Psoas muscle (tissue), 8 donors: ENCODE measurements at regions of chr4 and their contacts with region 1.

Region 1: GRCh38 chr4:53490965-53491622 is 100.2 kb downstream of the LNX1 start:
- DNase-seq: no peak
- ATAC-seq: peak in 3 of 4 donors; percentile 65 to 85 (median 65)
- H3K4me3 ChIP-seq: no peak overlapping the region
- H3K27ac ChIP-seq: no peak overlapping the region
- H3K4me1 ChIP-seq: peaks cover 11% of the 10 kb centered on the region
- H3K27me3 ChIP-seq: no peaks in the 10 kb centered on the region
- CTCF ChIP-seq: peak; percentile 71

Region 2: GRCh38 chr4:53532521-53532920 is 41.4 kb after region 1 on chr4:
- intact Hi-C with region 1: no loop called
- DNase-seq: no peak
- ATAC-seq: no peak
- H3K4me3 ChIP-seq: no peak overlapping the region
- H3K27ac ChIP-seq: no peak overlapping the region
- H3K4me1 ChIP-seq: no peaks in the 10 kb centered on the region
- H3K27me3 ChIP-seq: no peaks in the 10 kb centered on the region
- CTCF ChIP-seq: no peak

Region 3: DNA sequence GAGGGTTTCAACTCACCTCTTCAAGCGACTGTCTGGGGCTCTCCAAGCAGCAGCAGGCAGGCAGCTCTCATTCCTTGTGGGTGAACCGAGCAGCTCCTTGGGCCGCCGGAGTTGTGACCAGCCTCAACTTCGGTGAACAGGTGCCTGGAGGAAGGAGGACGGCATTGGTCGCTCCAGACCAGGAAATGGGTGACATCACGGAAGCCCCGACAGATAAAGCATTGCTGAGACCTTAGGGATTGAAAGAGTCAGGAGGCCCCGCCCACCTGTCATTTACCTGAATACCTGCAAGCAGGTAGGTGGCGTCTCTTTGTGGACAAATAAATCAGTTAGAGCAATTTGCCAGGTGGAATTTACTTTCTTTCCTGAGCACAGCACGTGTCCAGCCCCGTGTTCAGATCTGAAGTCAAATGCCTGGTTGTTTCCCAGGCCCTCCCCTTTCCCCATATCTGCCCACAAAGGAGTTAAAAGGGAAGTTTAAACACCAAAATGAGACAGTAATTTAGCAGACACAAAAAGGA is 100.3 kb after region 1 on chr4 and contains the start of gene LNX1:
- intact Hi-C with region 1: no loop called
- DNase-seq: no peak
- ATAC-seq: no peak
- H3K4me3 ChIP-seq: no peak within 1 kb of the TSS
- H3K27ac ChIP-seq: no peak within 1 kb of the TSS
- H3K4me1 ChIP-seq: no peaks in the 10 kb centered on the region
- H3K27me3 ChIP-seq: no peaks in the 10 kb centered on the region
- CTCF ChIP-seq: no peak
- total RNA-seq, gene LNX1: 2.1 to 13.9 (median 3.9) TPM

Region 4: DNA sequence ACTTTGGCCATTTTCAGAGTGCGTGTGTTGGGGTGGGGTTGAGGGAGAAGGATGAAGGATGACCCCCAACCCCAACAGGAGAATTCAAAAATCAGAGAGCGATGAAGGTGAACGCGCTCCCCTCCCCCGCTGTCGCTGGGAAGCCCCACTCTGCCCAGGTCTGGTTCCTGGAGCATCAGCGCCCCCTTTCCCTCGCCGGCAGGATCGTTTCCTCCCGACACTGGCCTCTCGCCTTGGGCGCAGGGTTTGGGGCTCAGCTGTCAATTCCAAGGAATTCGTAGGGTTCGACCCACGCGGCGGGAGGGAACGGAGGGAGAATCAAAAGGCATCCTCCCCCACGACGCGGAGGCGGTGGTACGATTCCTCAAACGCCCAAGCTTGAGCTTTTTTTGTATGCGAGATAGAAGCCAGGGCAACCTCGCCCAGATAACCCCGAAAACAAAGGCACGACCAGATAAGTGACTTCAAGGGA is 737.0 kb after region 1 on chr4:
- intact Hi-C with region 1: loop called (anchors 5 to 10 kb)
- DNase-seq: peak; percentile 79 to 86
- ATAC-seq: peak; percentile 54 to 69 (median 60)
- H3K4me3 ChIP-seq: peak overlapping the region; percentile 58
- H3K27ac ChIP-seq: no peak overlapping the region
- H3K4me1 ChIP-seq: peaks cover 35% of the 10 kb centered on the region
- H3K27me3 ChIP-seq: peaks cover 0 to 95% (median 48%) of the 10 kb centered on the region in 3 donors
- CTCF ChIP-seq: peak; percentile 48

Region 5: DNA sequence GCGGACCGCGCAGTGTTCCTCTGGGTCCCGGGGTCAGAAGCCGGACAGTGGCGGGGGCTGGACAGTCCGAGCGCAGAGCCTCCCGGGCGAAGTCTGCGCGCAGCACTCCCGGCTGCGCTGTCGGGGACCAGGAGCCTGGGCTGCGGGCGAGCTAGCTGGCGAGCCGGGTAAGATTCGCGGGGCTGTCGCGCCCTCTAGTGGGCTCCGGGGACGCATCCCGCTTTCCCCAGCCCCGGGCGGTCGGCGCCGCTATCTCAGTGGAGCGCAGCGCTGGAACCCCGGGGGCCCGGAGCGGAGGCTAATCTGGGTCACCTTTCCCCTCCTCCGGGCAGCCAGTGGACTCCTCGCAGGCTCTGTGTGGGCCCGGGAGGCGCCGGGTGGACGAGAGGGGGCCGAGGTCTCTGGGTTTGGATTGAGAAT is 742.2 kb after region 1 on chr4:
- intact Hi-C with region 1: loop called (anchors 5 to 10 kb)
- DNase-seq: peak; percentile 88 to 92
- ATAC-seq: peak; percentile 91 to 94 (median 94)
- H3K4me3 ChIP-seq: peak overlapping the region; percentile 70
- H3K27ac ChIP-seq: no peak overlapping the region
- H3K4me1 ChIP-seq: peaks cover 28% of the 10 kb centered on the region
- H3K27me3 ChIP-seq: peaks cover 0 to 47% (median 27%) of the 10 kb centered on the region in 3 donors
- CTCF ChIP-seq: peak; percentile 82